ENCODE measurements at regions of chrX and their contacts with region 1.

Region 1: GRCh38 chrX:55142206-55142918 is 53.5 kb downstream of the PAGE2 start:
- DNase-seq: peak; percentile 79
- ATAC-seq: peak; percentile 98
- H3K4me3 ChIP-seq: peak overlapping the region in 2 of 3 experiments; percentile 28 to 37; a peak in 3 of 6 replicates
- H3K27ac ChIP-seq: peak overlapping the region; percentile 78
- H3K4me1 ChIP-seq: peaks cover 23% of the 10 kb centered on the region
- H3K27me3 ChIP-seq: no peaks in the 10 kb centered on the region
- CTCF ChIP-seq: no peak
- EP300 ChIP-seq: no peak
- POLR2A ChIP-seq: 0 out of 4 replicates have a peak, but pooled peaks of 1 of the 2 experiments have one; percentile 26
- RAD21 ChIP-seq: no peak

Region 2: DNA sequence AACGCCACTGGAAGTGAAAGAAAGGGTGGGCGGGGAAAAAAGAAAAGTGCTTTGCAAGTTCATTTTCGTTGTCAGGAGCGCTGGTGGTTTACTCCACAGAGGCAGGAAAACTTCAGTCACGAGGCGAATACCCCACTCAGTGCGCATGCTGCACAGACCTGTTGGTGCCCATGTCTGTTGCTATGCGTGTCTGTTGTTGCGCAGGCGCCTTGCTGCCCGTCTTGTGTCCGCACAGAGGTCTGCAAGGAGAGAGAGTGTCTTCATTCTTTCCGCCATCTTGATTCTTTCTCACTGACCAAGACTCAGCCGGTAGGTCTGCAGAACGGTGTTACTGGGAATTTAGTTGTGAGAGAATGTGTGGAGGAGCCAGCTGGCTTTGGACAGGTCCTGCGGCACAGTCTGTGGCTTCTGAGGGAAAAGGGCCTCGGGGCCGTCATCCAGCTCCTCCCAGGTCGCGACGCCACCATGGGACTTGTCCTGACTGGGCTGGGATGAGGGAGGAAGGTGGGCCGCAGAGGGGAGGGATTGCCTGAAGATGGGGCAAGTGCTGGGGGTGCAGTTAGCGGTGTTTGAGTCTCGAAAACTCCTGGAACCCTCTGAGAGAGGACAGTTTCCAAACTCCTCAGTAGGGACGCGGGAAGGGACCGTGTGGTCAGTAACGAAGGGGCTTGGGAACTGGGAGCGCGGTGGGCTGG is 53.4 kb before region 1 on chrX and contains the start of gene PAGE2:
- CTCF ChIA-PET with region 1: no interaction called
- POLR2A ChIA-PET with region 1: no interaction called
- in situ Hi-C with region 1: no loop called
- intact Hi-C with region 1: no loop called
- DNase-seq: no peak
- ATAC-seq: no peak
- H3K4me3 ChIP-seq: no peak within 1 kb of the TSS
- H3K27ac ChIP-seq: no peak within 1 kb of the TSS
- H3K4me1 ChIP-seq: no peaks in the 10 kb centered on the region
- H3K27me3 ChIP-seq: no peaks in the 10 kb centered on the region
- CTCF ChIP-seq: no peak
- EP300 ChIP-seq: no peak
- POLR2A ChIP-seq: no peak
- RAD21 ChIP-seq: no peak
- total RNA-seq, gene PAGE2: not detected in 2 replicates

Region 3: GRCh38 chrX:55160685-55161552 is 18.6 kb after region 1 on chrX:
- CTCF ChIA-PET with region 1: no interaction called
- POLR2A ChIA-PET with region 1: no interaction called
- in situ Hi-C with region 1: no loop called
- intact Hi-C with region 1: loop called (anchors 2 kb)
- DNase-seq: peak; percentile 76
- ATAC-seq: peak; percentile 98
- H3K4me3 ChIP-seq: peak overlapping the region; percentile 64 to 78 (median 68)
- H3K27ac ChIP-seq: peak overlapping the region; percentile 82
- H3K4me1 ChIP-seq: 0 out of 2 replicates have a peak, but pooled peaks cover 11% of the 10 kb centered on the region
- H3K27me3 ChIP-seq: no peaks in the 10 kb centered on the region
- CTCF ChIP-seq: peak; percentile 80
- EP300 ChIP-seq: no peak; a peak in 1 of 4 replicates
- POLR2A ChIP-seq: peak; percentile 57 to 87
- RAD21 ChIP-seq: peak; percentile 81